Calu3 (cell line): ENCODE measurements at regions of chr6 and their contacts with region 1.

Region 1: DNA sequence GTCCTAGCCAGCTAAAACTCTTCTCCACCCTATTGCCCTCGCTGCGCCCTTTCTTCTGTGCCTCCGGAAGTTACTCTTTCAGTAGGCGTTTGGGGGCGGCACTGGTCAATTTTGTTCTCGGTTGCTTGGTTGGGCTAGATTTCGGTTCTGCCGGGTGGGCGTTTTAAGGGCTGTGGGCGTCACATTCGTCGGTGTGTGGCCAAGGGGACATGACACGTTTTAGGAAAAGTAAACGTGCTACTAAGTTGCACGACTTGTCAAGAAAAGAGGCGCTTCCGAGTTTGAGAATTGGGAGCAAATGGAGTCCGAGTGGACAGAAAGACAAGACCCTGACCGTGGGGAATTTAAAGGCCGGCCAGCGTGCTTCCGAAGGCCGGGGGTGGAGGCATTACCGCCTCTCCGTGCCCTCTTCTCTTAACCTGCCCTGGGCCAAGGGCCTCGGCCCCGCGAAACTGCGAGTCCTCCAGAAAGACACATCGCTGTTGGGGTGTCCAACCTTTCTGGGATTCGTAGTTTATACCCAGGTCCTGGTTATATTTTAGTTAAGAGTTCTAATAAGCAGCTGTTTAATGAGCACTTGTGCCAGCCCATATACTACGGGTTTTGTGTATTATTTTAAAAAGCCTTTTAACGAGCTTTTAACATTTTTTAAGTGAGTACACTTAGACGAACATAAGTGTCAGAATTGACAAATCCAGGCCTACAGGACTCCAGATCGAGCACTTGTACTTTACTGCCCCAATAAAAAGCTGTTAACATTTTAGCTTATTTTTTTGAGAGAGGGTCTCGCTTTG is 661 bp upstream of the BAG6 start:
- DNase-seq: no peak
- H3K4me3 Mint-ChIP-seq: peak overlapping the region; percentile 95
- H3K27ac Mint-ChIP-seq: peak overlapping the region; percentile 92
- H3K4me1 Mint-ChIP-seq: peaks cover 50% of the 10 kb centered on the region
- H3K27me3 Mint-ChIP-seq: no peaks in the 10 kb centered on the region
- CTCF ChIP-seq: no peak

Region 2: GRCh38 chr6:31620586-31621319 is 32.4 kb before region 1 on chr6 and contains the start of gene PRRC2A:
- CTCF ChIA-PET with region 1: interaction called, 15 read pairs
- intact Hi-C with region 1: no loop called
- DNase-seq: peak; percentile 89
- H3K4me3 Mint-ChIP-seq: peak within 1 kb of the TSS; percentile 84
- H3K27ac Mint-ChIP-seq: peak within 1 kb of the TSS; percentile 87
- H3K4me1 Mint-ChIP-seq: peaks cover 13% of the 10 kb centered on the region
- H3K27me3 Mint-ChIP-seq: peaks cover 14% of the 10 kb centered on the region
- CTCF ChIP-seq: no peak
- total RNA-seq, gene PRRC2A: 473 and 509 TPM in 2 replicates

Region 3: DNA sequence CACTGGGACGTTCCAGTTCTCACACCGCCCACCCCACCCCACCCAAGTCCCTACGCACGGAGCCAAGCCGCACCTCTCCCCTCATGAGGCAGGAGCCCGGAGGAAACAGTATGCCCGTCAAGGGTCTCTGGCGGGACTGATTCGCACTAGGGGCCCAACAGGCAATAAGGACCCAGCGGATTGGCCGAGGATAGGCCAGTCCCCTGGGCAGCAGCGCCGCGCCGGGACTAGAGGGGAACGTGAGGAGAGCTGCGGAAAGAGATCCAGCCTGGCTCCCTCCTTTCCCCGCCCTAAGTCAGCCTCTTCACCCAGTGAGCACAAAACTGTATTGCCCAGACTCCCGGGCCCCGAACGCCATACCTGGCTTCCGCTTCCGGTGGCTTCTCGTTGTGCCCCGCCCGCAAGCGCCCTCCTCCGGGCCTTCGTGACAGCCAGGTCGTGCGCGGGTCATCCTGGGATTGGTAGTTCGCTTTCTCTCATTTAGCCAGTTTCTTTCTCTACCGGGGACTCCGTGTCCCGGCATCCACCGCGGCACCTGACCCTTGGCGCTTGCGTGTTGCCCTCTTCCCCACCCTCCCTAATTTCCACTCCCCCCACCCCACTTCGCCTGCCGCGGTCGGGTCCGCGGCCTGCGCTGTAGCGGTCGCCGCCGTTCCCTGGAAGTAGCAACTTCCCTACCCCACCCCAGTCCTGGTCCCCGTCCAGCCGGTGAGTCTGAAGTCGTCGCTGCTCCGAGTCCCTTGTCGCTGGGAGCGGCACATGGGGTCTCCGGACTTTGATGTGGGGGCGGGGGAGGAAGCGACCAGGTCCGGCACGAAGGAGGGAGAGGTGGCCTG is 12.6 kb after region 1 on chr6 and contains the start of gene CSNK2B:
- CTCF ChIA-PET with region 1: interaction called, 23 read pairs
- intact Hi-C with region 1: loop called (anchors 1 kb)
- DNase-seq: peak; percentile 100
- H3K4me3 Mint-ChIP-seq: peak within 1 kb of the TSS; percentile 92
- H3K27ac Mint-ChIP-seq: peak within 1 kb of the TSS; percentile 91
- H3K4me1 Mint-ChIP-seq: peaks cover 49% of the 10 kb centered on the region
- H3K27me3 Mint-ChIP-seq: no peaks in the 10 kb centered on the region
- CTCF ChIP-seq: no peak
- total RNA-seq, gene CSNK2B: 337 and 357 TPM in 2 replicates

Region 4: DNA sequence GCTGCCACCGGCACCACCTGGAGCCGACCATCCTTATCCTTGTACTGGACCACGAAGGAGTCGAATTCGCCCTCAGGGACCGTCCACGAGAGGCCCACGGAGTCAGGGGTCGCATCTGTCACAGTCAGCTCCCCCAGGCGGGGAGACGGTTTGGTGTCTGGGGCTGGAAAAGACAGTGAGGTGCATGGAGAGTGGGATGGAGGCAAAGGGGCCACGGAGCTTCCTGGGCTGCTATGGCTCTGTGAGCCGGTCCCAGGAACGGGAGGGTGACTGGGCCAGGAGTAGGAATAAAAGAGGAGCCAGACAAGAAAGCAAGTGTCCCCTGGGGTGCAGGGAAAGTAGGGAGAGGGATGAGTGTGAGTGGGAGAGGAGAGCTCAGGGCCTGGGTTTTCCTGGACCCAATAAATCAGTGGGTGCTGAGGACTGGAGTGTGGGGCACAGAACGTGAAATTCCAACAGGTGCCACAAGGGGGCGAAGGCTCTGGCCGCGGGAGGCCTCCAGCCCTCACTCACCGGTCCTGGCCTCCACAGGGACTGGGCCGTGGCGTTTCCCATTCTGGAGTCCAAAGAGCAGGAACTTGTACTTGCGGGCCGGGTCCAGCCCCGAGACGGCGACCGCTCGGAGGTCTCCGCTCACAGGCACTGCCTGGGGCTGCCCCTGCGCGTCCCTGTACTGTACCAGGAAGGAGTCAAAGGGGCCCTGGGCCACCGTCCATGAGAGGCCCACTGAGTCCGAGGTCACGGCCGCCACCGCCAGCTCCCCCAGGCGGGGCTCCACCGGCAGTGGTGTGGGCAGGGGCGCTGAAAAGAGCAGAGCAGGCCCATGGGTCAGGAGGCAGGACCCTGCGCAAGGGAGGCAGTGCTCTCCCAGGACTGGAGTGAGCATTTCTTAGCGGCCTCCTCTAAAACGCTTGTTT is 395.0 kb after region 1 on chr6:
- CTCF ChIA-PET with region 1: no interaction called
- intact Hi-C with region 1: no loop called
- DNase-seq: peak; percentile 93
- H3K4me3 Mint-ChIP-seq: no peak overlapping the region
- H3K27ac Mint-ChIP-seq: no peak overlapping the region
- H3K4me1 Mint-ChIP-seq: peaks cover 16% of the 10 kb centered on the region
- H3K27me3 Mint-ChIP-seq: peaks cover 33% of the 10 kb centered on the region
- CTCF ChIP-seq: peak; percentile 95